Left cardiac atrium (tissue), 4 donors: ENCODE measurements at regions of chr15 and their contacts with region 1.

Region 1: DNA sequence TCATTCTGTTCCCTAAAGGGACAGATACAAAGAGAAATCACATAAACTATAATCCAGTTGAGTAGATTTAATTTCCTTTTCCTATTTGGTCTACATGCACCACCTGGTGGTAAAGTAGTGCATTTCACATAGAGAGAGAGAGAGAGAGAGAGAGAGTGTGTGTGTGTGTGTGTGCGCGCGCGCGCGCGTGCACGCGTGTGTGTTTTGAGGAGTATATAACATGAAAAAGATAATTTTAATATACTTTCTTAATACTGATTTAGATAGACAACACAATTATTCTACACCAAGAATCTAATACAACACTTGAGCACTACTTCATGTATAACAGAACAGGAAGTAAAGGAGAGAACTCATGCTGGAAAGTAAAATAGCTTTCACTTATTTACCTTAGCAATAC is 1.1 kb upstream of the FGF7 start:
- DNase-seq: peak; percentile 54
- ATAC-seq: peak; percentile 57 to 62

Region 2: GRCh38 chr15:48861813-48862431 is 560.1 kb before region 1 on chr15:
- intact Hi-C with region 1: loop called in 1 of 2 experiments (anchors 2 kb)
- DNase-seq: no peak
- ATAC-seq: peak; percentile 73 to 79

Region 3: DNA sequence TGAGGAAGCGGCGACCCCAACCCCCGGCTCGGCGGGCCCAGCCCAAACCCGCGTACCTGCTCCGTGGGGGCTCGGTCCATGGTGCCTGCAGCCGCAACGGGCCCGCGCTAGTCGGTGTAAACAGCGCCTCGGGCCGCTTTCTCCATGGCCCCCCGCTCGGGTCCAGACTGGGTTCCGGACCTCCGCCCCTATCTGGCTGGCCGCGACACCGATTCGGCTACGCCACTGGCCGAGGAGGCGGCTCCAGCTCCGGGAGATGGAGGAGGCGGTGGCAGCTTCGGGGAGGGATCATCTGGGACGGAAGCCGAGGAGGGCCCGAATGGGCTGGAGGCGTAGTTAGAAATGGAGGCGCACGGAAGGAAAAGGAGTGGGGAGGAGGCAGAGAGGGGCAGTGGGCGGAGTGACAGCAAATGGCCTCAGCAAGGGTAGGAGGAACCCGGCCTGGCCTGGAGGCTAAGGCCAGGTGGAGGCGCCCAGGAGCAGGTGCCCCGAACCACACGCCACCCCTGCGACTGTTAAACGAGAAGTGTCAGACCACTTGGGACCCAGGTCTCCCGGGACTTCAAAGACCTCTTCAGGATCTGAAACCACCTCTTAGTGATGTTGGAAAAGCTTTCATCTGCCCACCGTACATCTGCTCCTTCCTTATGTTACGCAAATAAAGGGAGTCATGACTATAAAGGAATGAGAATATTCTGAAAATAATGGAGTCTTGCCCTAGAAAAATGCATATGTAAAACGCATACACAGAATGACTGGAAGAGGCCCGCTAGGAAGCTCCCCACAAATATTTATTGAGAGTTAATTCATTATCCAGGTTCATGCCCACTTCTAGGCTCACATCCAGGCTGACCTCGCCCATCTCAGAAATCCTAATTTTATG is 375.5 kb before region 1 on chr15 and contains the start of gene SECISBP2L:
- intact Hi-C with region 1: loop called in 1 of 2 experiments (anchors 10 kb)
- DNase-seq: peak; percentile 95
- ATAC-seq: peak; percentile 98 to 99
- total RNA-seq, gene SECISBP2L: 30.5 to 35.0 TPM

Region 4: GRCh38 chr15:49235446-49236124 is 186.4 kb before region 1 on chr15:
- intact Hi-C with region 1: loop called in 1 of 2 experiments (anchors 2 kb)
- DNase-seq: peak; percentile 33
- ATAC-seq: peak; percentile 86 to 92

Region 5: DNA sequence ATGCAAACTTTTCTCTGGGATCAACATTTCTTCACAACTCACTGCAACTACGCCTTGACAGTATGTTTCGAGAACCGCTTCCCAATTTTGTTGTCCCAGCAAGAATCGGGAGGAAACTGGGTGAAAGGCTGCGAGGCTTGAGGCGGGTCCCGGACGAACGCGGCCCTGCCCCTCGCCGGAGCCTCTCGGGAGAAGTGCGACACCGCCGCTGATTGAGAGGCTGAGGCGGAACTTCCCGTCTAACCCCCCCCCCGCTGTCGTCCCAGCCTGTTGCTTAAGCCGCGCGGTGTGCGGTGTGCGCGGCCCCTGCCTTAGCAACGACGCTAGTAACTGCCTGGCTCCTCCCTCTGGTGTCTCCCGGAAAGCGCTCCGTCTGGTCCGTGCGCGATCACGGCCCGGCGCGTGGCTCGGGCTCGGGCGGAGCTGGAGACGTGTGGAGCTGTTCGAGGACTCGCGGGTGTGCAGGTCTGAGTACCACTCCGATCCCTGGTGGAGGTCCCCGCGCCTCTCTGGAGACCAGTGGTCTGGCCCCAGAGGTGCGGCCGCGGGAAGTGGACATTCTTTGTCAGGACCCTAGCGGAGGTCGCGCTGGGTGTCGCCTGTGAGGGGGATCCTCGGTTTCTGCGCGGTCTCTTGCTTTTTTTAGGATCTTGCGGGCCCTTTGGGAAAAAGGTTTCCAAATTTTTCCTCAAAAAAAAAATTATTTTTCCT is 198.8 kb after region 1 on chr15 and contains the starts of genes DTWD1 and FAM227B:
- intact Hi-C with region 1: loop called in 1 of 2 experiments (anchors 10 kb)
- DNase-seq: peak; percentile 98
- ATAC-seq: peak; percentile 99 to 100
- total RNA-seq, gene DTWD1: 25.2 to 25.7 TPM
- total RNA-seq, gene FAM227B: 8.2 to 9.8 TPM

Region 6: DNA sequence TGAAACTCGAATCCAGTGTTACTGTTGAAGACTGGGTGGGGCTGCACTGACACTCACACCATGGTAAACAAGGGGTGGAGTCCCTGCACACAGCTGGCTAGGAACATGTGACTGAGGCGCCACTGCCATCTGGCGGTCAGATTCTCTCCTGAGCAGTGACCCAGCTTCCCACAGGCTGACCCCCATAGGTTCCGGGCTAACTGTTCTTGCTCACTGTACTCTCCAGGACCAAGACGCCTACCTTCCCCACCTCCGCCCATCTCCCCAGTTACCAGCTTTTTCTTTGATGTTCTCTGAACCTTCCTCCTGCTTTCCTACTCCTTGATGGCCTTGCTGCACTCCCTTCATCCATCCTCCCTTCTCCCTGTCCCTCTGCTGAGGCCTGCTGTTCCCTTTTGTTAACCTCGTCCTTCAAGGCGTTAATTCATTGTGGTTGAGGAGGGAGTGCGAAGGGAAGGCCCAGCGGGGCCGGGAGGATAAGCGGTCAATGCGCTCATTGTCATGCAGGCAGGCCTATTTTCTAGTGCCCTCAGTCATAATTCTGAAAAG is 581.9 kb after region 1 on chr15:
- intact Hi-C with region 1: loop called in 1 of 2 experiments (anchors 10 kb)
- DNase-seq: peak; percentile 84
- ATAC-seq: peak; percentile 98 to 100